Endothelial cell of umbilical vein (primary cell): ENCODE measurements at regions of chr22 and their contacts with region 1.

Region 1: GRCh38 chr22:19178656-19179496 is at the start of gene SLC25A1:
- DNase-seq: peak; percentile 88
- H3K4me3 ChIP-seq: peak within 1 kb of the TSS; percentile 60 to 89 (median 68)
- H3K27ac ChIP-seq: peak within 1 kb of the TSS; percentile 56
- H3K4me1 ChIP-seq: peaks cover 7% of the 10 kb centered on the region
- H3K27me3 ChIP-seq: no peaks in the 10 kb centered on the region
- CTCF ChIP-seq: no peak
- POLR2A ChIP-seq: peak; percentile 31
- total RNA-seq, gene SLC25A1: 94.5 and 102 TPM in 2 replicates

Region 2: GRCh38 chr22:19143967-19144400 is 34.9 kb before region 1 on chr22:
- CTCF ChIA-PET with region 1: interaction called, 23 read pairs
- POLR2A ChIA-PET with region 1: no interaction called
- dilution Hi-C with region 1: no loop called
- intact Hi-C with region 1: loop called (anchors 1 kb)
- DNase-seq: no peak
- H3K4me3 ChIP-seq: peak overlapping the region; percentile 69 to 94 (median 78)
- H3K27ac ChIP-seq: peak overlapping the region; percentile 54
- H3K4me1 ChIP-seq: peaks cover 7% of the 10 kb centered on the region
- H3K27me3 ChIP-seq: peaks cover 17 to 21% of the 10 kb centered on the region in 2 experiments
- CTCF ChIP-seq: no peak
- POLR2A ChIP-seq: no peak

Region 3: DNA sequence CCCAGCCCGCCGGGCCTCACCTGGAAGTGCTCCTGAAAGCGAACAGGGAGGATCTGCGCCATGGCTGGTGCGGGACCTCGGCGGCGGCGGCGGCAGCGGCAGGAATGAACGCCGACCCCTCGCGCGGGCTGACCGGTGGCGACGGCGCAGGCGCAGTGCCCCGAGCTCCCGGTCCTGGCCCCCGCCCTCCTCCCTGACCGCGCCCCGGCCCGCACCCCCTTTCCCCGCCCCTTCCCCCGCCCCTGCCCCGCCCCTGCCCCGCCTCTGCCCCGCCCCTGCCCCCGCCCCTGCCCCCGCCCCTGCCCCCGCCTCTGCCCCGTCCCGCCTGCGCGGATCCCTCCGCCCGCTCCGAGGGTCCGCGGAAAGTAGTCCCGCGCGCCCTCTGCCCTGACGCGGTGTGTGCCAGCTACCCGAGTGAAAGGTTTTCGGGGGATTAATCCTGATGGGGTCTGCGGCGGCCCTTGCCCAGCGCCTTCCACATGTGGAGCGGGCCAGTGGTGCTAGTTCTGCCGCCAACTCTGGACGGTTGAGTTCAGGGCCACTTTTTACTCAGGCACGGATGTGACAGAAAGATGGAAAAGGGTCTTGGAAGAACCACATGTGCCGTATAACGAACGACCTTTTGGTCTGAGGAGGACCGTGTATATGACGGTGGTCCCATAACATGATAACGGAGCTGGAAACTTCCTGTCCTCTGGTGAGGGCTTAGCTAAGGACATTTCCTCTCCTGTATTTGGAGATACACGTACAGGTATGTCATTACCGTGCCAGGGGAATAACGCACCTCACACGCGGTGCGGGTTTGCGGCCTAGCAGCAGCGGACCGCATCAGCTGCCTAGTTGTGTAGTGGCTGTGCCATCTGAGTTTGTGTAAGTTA is 112.9 kb after region 1 on chr22 and contains the start of gene CLTCL1:
- CTCF ChIA-PET with region 1: interaction called, 14 read pairs
- POLR2A ChIA-PET with region 1: interaction called, 5 read pairs
- dilution Hi-C with region 1: no loop called
- intact Hi-C with region 1: no loop called
- DNase-seq: peak; percentile 70
- H3K4me3 ChIP-seq: peak within 1 kb of the TSS; percentile 78 to 89 (median 85)
- H3K27ac ChIP-seq: no peak within 1 kb of the TSS
- H3K4me1 ChIP-seq: peaks cover 11% of the 10 kb centered on the region
- H3K27me3 ChIP-seq: peaks cover 2 to 5% of the 10 kb centered on the region in 2 experiments
- CTCF ChIP-seq: no peak
- POLR2A ChIP-seq: peak; percentile 46
- total RNA-seq, gene CLTCL1: 6.2 and 6.8 TPM in 2 replicates

Region 4: DNA sequence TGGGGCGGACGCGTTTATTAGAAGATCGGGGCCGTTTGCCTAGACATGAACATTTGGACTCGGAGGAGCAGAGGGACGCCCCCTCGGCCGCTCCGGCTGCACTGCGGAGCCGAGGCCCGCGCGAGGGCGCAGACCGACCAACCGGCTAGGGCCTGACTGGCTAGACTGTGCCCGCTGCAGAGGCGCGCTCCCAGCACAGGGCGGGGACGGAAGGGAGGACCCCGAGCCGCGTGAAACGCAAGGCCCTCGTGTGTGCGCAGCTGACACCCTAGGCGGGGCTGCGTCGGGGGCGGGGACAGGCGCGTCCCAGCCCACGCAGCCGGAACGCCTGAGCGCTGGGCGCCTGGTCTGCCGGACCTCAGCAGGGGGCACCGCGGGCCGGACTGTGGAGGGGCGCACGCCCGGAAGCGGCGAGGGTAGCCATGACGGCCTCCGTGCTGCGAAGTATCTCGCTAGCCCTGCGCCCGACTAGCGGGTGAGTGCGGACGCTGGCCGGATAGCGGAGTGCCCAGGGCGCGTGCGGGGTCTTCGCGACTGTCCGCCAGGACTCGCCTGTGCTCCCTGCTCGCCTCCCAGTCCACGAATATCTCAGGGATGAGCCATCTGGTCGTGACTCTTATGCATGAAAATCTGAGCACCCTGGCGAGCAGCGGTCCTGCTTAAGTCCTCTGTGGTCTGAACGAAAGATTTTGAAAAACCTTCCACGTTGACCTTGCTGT is 253.4 kb after region 1 on chr22 and contains the start of gene MRPL40:
- CTCF ChIA-PET with region 1: interaction called, 4 read pairs
- POLR2A ChIA-PET with region 1: no interaction called
- dilution Hi-C with region 1: no loop called
- intact Hi-C with region 1: loop called (anchors 2 kb)
- DNase-seq: peak; percentile 94
- H3K4me3 ChIP-seq: peak within 1 kb of the TSS; percentile 86 to 88 (median 86)
- H3K27ac ChIP-seq: peak within 1 kb of the TSS; percentile 75
- H3K4me1 ChIP-seq: peaks cover 17% of the 10 kb centered on the region
- H3K27me3 ChIP-seq: no peaks in the 10 kb centered on the region
- CTCF ChIP-seq: no peak
- POLR2A ChIP-seq: peak; percentile 95
- total RNA-seq, gene MRPL40: 27.4 and 30.6 TPM in 2 replicates

Region 5: GRCh38 chr22:19447388-19448075 is 268.7 kb after region 1 on chr22 and contains the start of gene C22orf39:
- CTCF ChIA-PET with region 1: interaction called, 3 read pairs
- POLR2A ChIA-PET with region 1: no interaction called
- dilution Hi-C with region 1: no loop called
- intact Hi-C with region 1: loop called (anchors 5 kb)
- DNase-seq: peak; percentile 94
- H3K4me3 ChIP-seq: peak within 1 kb of the TSS; percentile 80 to 92 (median 89)
- H3K27ac ChIP-seq: peak within 1 kb of the TSS; percentile 49
- H3K4me1 ChIP-seq: peaks cover 11% of the 10 kb centered on the region
- H3K27me3 ChIP-seq: no peaks in the 10 kb centered on the region
- CTCF ChIP-seq: no peak
- POLR2A ChIP-seq: peak; percentile 77
- total RNA-seq, gene C22orf39: 25.0 and 26.1 TPM in 2 replicates

Region 6: DNA sequence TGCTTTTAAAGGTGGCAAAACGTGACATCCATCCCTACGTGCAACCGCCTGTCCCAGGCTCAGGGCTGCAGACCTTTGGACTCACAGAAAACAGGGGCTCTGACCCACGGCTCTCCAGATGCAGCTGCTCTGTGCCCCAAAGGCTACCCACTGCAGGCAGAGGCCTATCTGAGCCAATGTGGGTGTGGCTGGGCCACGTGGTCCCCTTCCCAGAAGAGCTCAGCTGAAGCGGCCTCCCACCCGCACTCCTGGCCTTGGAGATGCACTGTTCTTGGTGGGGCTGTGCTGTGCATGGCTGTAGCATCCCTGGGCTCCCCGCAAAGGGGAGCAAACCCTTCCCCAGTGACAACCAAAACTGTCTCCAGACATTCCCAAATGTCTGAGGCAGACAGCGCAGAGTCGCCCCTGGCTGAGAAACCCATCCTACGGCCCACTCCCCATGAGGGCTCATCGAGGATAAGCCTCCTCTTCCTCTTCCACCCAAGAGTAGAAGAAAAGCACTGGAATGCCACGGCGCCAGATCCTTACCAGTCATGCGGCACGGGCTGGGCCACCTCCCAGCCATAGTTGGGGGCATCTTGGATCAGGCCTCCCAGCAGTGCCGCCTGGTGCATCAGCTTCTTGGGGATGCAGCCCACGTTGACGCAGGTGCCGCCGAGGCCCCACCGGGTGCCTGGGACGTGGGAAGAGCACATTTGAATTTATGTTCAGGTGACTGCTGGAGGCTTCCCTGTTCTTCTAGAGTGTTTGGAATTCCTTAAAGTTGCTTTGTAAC is 739.6 kb after region 1 on chr22:
- CTCF ChIA-PET with region 1: no interaction called
- POLR2A ChIA-PET with region 1: no interaction called
- dilution Hi-C with region 1: no loop called
- intact Hi-C with region 1: no loop called
- DNase-seq: no peak
- H3K4me3 ChIP-seq: no peak overlapping the region
- H3K27ac ChIP-seq: no peak overlapping the region
- H3K4me1 ChIP-seq: no peaks in the 10 kb centered on the region
- H3K27me3 ChIP-seq: no peaks in the 10 kb centered on the region
- CTCF ChIP-seq: no peak
- POLR2A ChIP-seq: no peak